ENCODE measurements at regions of chr20 and their contacts with region 1.

Region 1: GRCh38 chr20:8722276-8722928 is 346.5 kb upstream of the PLCB4 start:
- DNase-seq: peak; percentile 67 to 68
- H3K4me3 ChIP-seq: no peak overlapping the region
- H3K4me1 ChIP-seq: peaks cover 4% of the 10 kb centered on the region
- H3K27me3 ChIP-seq: no peaks in the 10 kb centered on the region

Region 2: GRCh38 chr20:7926767-7927166 is 795.6 kb before region 1 on chr20:
- in situ Hi-C with region 1: loop called (anchors 25 kb)
- DNase-seq: peak; percentile 13 to 15
- H3K4me3 ChIP-seq: no peak overlapping the region
- H3K4me1 ChIP-seq: no peaks in the 10 kb centered on the region
- H3K27me3 ChIP-seq: peaks cover 9% of the 10 kb centered on the region

Region 3: GRCh38 chr20:8043687-8044282 is 678.6 kb before region 1 on chr20:
- in situ Hi-C with region 1: loop called (anchors 10 kb)
- DNase-seq: peak; percentile 43 to 69
- H3K4me3 ChIP-seq: no peak overlapping the region
- H3K4me1 ChIP-seq: peaks cover 3% of the 10 kb centered on the region
- H3K27me3 ChIP-seq: peaks cover 2% of the 10 kb centered on the region; the same call in 1 of the 2 replicates

Region 4: DNA sequence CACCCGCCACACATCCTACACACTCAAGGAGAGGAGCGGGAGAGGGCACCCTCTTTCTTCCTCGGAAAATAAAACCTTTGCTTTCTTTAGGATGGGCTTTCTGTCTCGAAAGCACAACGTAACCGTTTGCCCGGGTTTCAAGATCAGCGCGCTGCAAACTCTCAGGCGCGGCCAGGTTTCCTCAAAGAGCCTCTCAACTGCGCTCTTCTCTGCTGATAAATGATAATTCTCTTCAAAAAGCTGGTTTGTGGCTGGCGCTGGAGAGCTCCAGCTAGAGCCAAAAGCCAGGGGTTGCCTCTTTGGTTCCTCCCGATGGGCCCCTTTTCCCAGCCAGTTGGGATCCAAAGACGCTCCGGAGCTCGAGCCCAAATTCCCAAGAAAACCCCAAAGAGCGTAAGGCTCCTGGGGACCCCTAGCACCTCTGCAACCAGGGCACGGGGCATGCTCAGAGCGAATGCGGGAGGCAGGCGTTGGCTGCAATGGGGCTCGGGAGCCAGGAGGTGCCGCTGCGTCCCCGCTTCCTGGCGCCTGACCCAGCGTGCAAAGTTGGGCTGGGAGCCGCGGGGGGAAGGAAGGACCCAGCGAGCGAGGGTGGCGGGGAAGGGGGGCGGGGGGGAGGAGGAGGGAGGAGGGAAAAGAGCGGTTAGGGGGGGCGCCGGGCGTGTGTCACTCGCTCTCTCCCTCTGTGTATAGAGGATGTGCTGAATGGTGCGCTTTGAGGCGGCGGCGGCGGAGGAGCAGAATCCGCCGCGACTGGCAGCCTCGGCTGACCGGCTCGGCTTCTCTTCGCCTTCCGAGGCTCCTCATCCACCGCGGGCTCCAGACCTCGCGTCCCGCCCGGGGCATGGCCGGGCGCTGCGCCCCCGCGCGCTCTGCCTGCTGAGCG is 590.6 kb before region 1 on chr20 and contains the start of gene PLCB1:
- in situ Hi-C with region 1: loop called (anchors 25 kb)
- DNase-seq: peak; percentile 71 to 90
- H3K4me3 ChIP-seq: peak within 1 kb of the TSS; percentile 34
- H3K4me1 ChIP-seq: peaks cover 39% of the 10 kb centered on the region
- H3K27me3 ChIP-seq: no peaks in the 10 kb centered on the region

Region 5: DNA sequence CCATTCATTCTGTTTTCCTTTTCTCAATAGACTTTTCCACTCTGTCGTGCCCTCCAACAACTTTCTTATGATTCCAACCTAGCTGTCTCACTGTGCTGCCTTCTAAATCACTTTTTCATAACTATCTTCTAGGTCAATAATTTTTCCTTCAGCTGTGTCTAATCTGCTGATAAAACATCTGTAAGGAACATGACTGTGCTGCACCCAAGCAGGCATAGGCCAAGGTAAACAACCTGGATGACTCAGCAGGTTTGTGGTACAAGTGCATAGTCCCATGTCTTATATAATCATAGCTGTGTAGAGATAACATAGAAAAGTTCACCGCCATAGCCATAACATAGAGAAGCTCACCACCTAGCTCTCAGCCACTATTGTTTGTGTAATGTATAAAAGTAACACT is 258.0 kb before region 1 on chr20:
- in situ Hi-C with region 1: no loop called
- DNase-seq: no peak
- H3K4me3 ChIP-seq: no peak overlapping the region
- H3K4me1 ChIP-seq: no peaks in the 10 kb centered on the region
- H3K27me3 ChIP-seq: no peaks in the 10 kb centered on the region

Region 6: DNA sequence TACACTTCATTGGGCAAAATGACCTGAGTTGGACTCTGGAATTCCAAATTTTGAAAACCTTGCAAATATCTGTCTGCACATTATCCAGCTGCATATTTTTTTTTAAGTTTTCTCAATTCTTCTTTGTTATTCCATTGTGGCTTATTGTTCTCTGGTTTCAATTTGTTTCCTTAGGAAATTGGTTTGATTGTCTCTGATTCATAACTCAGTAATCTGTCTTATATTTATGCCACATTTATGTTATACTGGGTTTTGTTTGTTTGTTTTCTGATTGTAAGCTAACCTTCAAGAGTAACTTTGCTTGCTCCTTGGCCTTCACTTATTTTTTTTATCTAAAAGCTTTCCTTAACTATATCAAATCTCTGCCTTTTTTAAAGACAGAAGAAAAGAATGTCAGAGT is 153.2 kb after region 1 on chr20:
- in situ Hi-C with region 1: no loop called
- DNase-seq: no peak
- H3K4me3 ChIP-seq: no peak overlapping the region
- H3K4me1 ChIP-seq: peaks cover 9% of the 10 kb centered on the region
- H3K27me3 ChIP-seq: no peaks in the 10 kb centered on the region

Region 7: GRCh38 chr20:9103955-9104354 is 381.6 kb after region 1 on chr20:
- in situ Hi-C with region 1: no loop called
- DNase-seq: no peak
- H3K4me3 ChIP-seq: no peak overlapping the region
- H3K4me1 ChIP-seq: no peaks in the 10 kb centered on the region
- H3K27me3 ChIP-seq: no peaks in the 10 kb centered on the region